ENCODE measurements at regions of chr11 and their contacts with region 1.

Region 1: GRCh38 chr11:95692526-95693260 is 96.9 kb downstream of the FAM76B start:
- DNase-seq: no peak
- H3K4me3 ChIP-seq: no peak overlapping the region
- H3K27ac ChIP-seq: peak overlapping the region; percentile 48
- H3K27me3 ChIP-seq: no peaks in the 10 kb centered on the region
- CTCF ChIP-seq: no peak

Region 2: DNA sequence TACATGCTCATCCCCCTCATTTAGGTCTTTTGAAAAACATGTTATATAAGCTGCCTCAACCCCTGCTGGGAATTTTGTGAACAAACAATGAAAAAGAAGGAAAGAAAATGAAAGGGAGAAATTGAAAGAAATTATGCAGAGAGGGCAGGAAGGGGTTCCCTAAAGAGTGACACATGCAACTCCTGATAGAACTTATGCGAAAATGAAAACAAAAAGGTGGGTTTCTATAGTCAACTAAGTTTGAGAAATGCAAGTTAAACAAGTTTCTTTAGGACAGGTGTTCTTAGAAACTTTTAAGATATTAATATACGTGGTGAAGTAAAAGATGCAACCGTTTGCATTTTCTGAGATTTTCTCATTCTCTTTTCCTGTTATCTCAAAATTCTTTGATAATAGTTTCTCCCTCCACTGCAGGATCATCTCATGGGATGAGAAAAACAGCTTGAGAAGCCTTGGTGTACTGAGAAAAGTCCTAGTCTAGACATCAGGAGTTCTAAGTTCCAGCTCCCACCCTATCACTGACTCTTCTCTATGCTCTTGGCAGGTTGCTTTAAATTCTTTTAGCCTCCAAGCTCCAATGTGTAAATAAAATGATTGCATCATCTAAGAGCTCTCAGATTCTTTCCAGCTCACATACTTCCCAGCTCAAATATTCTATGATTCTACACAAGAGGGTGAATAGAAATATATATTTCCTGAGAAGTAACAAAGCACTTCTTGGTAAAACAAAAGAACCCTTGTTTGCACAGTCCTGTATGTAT is 12.3 kb before region 1 on chr11:
- CTCF ChIA-PET with region 1: interaction called, 3 read pairs
- POLR2A ChIA-PET with region 1: interaction called, 10 read pairs
- DNase-seq: peak; percentile 70
- H3K4me3 ChIP-seq: no peak overlapping the region
- H3K27ac ChIP-seq: no peak overlapping the region
- H3K27me3 ChIP-seq: no peaks in the 10 kb centered on the region
- CTCF ChIP-seq: no peak

Region 3: DNA sequence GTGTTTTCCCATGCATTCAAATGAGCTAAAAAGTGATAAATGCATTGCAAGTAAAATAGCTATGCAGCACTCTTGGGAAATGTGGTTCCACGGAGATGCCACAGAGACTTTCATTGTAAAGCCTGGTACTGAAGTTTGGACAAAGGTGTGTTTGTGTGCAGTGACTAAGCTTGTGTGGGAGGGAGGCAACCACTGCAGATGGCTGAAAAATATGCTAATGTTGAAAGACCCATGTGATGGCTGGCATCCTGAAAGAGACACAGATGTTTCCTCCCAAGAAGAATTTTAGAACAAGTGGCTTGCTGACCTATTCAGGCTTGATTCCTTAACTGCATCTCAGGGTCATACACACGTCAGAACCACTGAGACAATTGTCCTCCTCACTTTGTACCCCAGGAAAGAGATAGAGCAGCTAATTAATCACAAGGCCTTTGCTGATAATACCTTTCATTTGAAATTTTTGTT is 23.1 kb after region 1 on chr11:
- CTCF ChIA-PET with region 1: no interaction called
- POLR2A ChIA-PET with region 1: no interaction called
- DNase-seq: no peak
- H3K4me3 ChIP-seq: no peak overlapping the region
- H3K27ac ChIP-seq: no peak overlapping the region
- H3K27me3 ChIP-seq: peaks cover 11% of the 10 kb centered on the region
- CTCF ChIP-seq: no peak